WTC11 (cell line): ENCODE measurements at regions of chr10 and their contacts with region 1.

Region 1: DNA sequence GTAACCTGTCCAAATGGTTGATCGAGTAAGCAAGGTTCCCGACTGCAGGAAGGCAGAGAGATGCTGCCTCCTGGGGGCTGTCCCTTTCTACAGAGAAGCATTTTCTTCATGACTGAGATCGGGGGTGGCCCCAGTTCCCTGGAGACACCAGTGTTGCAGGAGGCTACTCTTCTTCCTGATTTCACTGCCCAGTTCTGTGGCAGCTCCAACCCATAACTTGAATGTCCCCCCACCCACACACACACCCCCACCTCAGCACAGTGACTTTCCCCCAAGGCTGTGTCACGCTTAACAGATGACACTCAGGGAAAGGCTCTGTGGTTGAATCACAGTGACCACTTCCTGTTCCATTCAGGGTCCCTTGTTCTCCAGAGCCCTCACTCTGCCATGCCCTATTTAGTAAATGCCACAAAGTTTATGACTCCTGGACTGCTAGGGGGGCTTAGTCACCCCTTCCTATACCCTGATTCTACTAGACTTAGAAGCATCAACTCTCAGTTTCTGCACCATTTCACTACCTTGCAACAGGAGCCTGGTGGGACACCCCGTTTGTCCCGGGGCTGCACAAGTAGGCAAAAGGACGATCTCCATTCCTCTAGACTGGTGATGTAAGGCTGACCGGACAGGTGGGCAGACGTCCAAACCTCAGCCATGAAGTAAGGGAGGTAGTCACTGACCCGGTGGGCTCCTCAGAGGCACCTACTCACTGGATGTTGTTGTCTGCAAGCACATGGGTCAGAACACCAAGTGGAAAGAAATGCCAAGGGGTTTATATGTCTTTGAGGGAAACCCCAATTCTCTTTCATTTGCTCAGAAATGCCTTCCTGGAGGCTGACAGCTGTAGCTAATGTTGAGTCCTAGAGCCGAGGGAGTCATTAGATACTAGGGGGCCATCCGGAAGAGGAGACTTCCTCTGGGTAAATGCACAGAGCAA is 31.3 kb upstream of the SMC3 start:
- DNase-seq: peak; percentile 30
- ATAC-seq: peak; percentile 68
- H3K4me3 Mint-ChIP-seq: no peak overlapping the region
- H3K27ac Mint-ChIP-seq: no peak overlapping the region
- H3K4me1 Mint-ChIP-seq: peaks cover 26% of the 10 kb centered on the region
- H3K27me3 Mint-ChIP-seq: no peaks in the 10 kb centered on the region
- CTCF ChIP-seq: no peak

Region 2: DNA sequence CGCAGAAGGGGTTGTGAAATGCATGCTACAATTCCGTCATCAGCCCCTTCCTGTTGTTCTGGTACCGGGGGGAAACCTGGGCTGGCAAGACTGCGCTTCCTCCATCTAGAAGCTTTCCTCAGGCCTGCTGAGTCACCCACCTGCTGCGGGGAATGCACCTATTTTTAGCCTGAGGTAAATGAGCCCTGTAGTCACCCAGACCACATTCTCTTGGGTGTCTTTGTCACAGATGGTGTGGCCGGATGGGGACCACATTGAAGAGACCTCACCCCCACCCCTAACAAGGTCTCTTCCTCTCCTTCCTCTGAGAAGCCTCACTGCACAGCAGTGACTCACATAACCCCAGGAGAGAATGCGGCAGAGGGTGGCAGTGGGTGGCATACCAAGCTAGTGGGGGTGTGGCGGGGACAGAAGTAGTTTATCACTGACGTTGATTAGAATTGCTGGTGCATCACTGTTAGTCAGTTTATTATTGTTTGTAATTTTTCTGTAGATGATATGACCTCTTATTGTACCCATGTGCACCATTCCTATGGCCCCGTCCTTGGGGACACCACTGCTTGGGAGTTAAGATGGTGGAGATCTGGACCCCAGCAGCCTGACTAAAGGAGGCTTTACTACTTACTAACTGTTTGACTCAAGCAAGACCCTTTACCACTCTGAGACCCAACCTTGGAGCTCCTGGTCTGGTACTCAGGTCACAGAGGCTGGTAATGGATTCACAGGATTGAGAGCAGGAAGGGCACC is 121.5 kb before region 1 on chr10:
- CTCF ChIA-PET with region 1: no interaction called
- POLR2A ChIA-PET with region 1: no interaction called
- DNase-seq: no peak
- ATAC-seq: no peak
- H3K4me3 Mint-ChIP-seq: no peak overlapping the region
- H3K27ac Mint-ChIP-seq: no peak overlapping the region
- H3K4me1 Mint-ChIP-seq: peaks cover 6% of the 10 kb centered on the region
- H3K27me3 Mint-ChIP-seq: no peaks in the 10 kb centered on the region
- CTCF ChIP-seq: no peak

Region 3: GRCh38 chr10:110514848-110515247 is 21.4 kb before region 1 on chr10:
- CTCF ChIA-PET with region 1: no interaction called
- POLR2A ChIA-PET with region 1: interaction called, 10 read pairs
- DNase-seq: no peak
- ATAC-seq: no peak
- H3K4me3 Mint-ChIP-seq: no peak overlapping the region
- H3K27ac Mint-ChIP-seq: no peak overlapping the region
- H3K4me1 Mint-ChIP-seq: 0 out of 2 replicates have a peak, but pooled peaks cover 2% of the 10 kb centered on the region
- H3K27me3 Mint-ChIP-seq: no peaks in the 10 kb centered on the region
- CTCF ChIP-seq: no peak